ENCODE measurements at regions of chr13 and their contacts with region 1.

Region 1: GRCh38 chr13:76903544-76904162 is 17.4 kb upstream of the KCTD12 start:
- DNase-seq: peak; percentile 56
- ATAC-seq: peak; percentile 91

Region 2: DNA sequence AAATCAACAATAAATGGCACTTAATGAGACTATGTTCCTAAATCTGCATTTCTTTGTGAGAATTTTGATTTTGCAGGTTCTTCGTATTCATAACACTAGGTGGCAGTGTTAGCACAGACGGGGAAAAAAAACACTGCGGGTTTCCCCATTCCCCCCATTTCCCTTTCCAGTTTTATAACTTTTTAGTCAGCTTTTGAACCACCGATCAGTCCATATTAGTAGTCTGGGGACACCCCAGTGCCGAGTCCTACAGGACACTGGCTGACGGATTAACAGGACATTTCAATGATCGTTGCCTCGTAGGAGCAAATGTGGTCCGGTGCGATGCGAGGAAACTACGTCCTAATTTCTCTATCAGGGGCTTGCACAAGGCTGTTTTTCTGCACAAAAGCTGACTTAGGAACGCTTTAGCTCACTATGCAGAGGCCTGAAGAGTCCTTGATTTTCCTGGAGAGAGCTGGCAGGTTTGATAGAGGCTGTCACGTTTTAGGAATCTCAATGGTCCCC is 1033.2 kb before region 1 on chr13:
- intact Hi-C with region 1: loop called (anchors 5 kb)
- DNase-seq: no peak
- ATAC-seq: peak; percentile 44

Region 3: GRCh38 chr13:76667551-76667950 is 236.1 kb before region 1 on chr13:
- intact Hi-C with region 1: loop called (anchors 5 kb)
- DNase-seq: no peak
- ATAC-seq: peak; percentile 73

Measured in Right ventricle myocardium superior (tissue), 1 donor.